Lower leg skin (tissue), 4 donors: ENCODE measurements at regions of chr6 and their contacts with region 1.

Region 1: GRCh38 chr6:106444777-106445507 is 84.4 kb downstream of the CRYBG1 start:
- DNase-seq: peak in 1 of 2 donors; percentile 22
- H3K4me3 ChIP-seq: no peak overlapping the region
- CTCF ChIP-seq: peak in 1 of 3 donors; percentile 33
- POLR2A ChIP-seq: no peak

Region 2: DNA sequence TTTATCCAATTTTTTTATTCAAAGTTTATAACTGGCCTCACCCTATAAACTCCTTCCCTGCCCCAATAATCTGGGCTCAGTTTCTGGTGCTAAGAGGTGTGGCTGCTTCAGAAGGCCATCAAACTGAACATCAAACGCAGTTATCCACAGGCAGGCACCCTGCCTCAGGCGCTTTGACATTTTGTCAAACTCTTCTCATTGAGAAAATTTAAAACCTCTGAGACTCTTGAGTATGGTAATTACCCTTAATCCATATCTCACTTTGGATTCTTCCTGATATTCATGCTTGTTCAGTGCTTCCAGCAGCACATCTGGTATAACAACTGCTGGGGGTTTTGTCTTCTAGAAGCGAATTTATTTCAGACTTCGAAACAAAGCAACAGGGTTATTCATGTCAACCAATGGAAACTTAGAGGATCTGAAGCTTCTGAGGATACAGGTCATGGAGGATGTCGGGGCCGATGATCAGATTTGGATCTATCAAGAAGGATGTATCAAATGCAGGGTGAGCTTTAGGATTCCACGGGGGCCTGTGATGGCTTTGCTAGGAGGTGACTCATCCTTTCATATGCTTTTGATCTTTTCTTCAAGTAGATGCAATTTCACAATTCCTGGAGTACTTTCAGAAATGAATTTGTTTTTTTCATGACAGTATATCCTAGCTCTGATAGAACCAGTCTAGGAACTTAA is 116.2 kb after region 1 on chr6:
- intact Hi-C with region 1: loop called (anchors 5 kb)
- DNase-seq: no peak
- H3K4me3 ChIP-seq: no peak overlapping the region
- CTCF ChIP-seq: no peak
- POLR2A ChIP-seq: no peak

Region 3: GRCh38 chr6:106979427-106979884 is 534.5 kb after region 1 on chr6:
- intact Hi-C with region 1: loop called (anchors 5 kb)
- DNase-seq: peak; percentile 77 to 97
- H3K4me3 ChIP-seq: no peak overlapping the region
- CTCF ChIP-seq: peak in 1 of 3 donors; percentile 80
- POLR2A ChIP-seq: no peak